Activated B cell treated with CpG ODN at 0.5 μM for 24 hours (primary cell): ENCODE measurements at regions of chr15 and their contacts with region 1.

Region 1: GRCh38 chr15:85330901-85331588 is 49.4 kb upstream of the AKAP13 start:
- DNase-seq: peak; percentile 56
- ATAC-seq: peak; percentile 53
- H3K4me3 Mint-ChIP-seq: peak overlapping the region; percentile 90
- H3K27ac Mint-ChIP-seq: peak overlapping the region; percentile 99
- H3K4me1 Mint-ChIP-seq: peaks cover 74% of the 10 kb centered on the region
- H3K27me3 Mint-ChIP-seq: no peaks in the 10 kb centered on the region
- CTCF ChIP-seq: no peak

Region 2: DNA sequence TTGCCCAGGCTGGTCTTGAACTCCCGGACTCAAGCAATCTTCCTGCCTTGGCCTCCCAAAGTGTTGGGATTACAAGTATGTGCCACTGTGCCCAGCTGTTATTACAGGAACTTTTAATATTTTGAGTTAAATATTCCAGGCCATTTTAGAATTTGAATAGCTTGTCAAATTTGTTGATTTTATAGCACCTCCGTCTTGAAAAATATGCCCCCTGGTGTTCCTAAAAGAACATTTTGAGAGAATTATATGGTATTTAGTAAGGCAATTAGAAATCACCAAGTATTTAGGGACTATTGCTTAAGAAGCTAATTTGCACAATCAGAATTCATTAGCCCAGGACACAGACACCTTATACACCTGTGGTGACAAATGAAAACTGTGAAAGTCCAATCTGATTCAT is 325.7 kb before region 1 on chr15:
- CTCF ChIA-PET with region 1: no interaction called
- POLR2A ChIA-PET with region 1: no interaction called
- intact Hi-C with region 1: no loop called
- DNase-seq: no peak
- ATAC-seq: no peak
- H3K4me3 Mint-ChIP-seq: no peak overlapping the region
- H3K27ac Mint-ChIP-seq: no peak overlapping the region
- H3K4me1 Mint-ChIP-seq: peaks cover 67% of the 10 kb centered on the region
- H3K27me3 Mint-ChIP-seq: no peaks in the 10 kb centered on the region
- CTCF ChIP-seq: no peak

Region 3: GRCh38 chr15:85306946-85307708 is 23.9 kb before region 1 on chr15:
- CTCF ChIA-PET with region 1: interaction called, 54 read pairs
- POLR2A ChIA-PET with region 1: interaction called, 409 read pairs
- intact Hi-C with region 1: loop called (anchors 1 kb)
- DNase-seq: no peak
- ATAC-seq: no peak
- H3K4me3 Mint-ChIP-seq: no peak overlapping the region
- H3K27ac Mint-ChIP-seq: peak overlapping the region; percentile 61
- H3K4me1 Mint-ChIP-seq: peaks cover 68% of the 10 kb centered on the region
- H3K27me3 Mint-ChIP-seq: no peaks in the 10 kb centered on the region
- CTCF ChIP-seq: no peak

Region 4: GRCh38 chr15:85380217-85380811 is 49.3 kb after region 1 on chr15 and contains the start of gene AKAP13:
- CTCF ChIA-PET with region 1: interaction called, 9 read pairs
- POLR2A ChIA-PET with region 1: interaction called, 179 read pairs
- intact Hi-C with region 1: loop called (anchors 1 kb)
- DNase-seq: peak; percentile 80
- ATAC-seq: peak; percentile 81
- H3K4me3 Mint-ChIP-seq: peak within 1 kb of the TSS; percentile 93
- H3K27ac Mint-ChIP-seq: peak within 1 kb of the TSS; percentile 94
- H3K4me1 Mint-ChIP-seq: peaks cover 42% of the 10 kb centered on the region
- H3K27me3 Mint-ChIP-seq: no peaks in the 10 kb centered on the region
- CTCF ChIP-seq: no peak
- total RNA-seq, gene AKAP13: 254 and 290 TPM in 2 replicates

Region 5: GRCh38 chr15:85407804-85408746 is 77.0 kb after region 1 on chr15:
- CTCF ChIA-PET with region 1: interaction called, 150 read pairs
- POLR2A ChIA-PET with region 1: interaction called, 94 read pairs
- intact Hi-C with region 1: loop called (anchors 1 kb)
- DNase-seq: no peak
- ATAC-seq: peak; percentile 68
- H3K4me3 Mint-ChIP-seq: peak overlapping the region; percentile 70
- H3K27ac Mint-ChIP-seq: peak overlapping the region; percentile 95
- H3K4me1 Mint-ChIP-seq: peaks cover 88% of the 10 kb centered on the region
- H3K27me3 Mint-ChIP-seq: no peaks in the 10 kb centered on the region
- CTCF ChIP-seq: no peak

Region 6: GRCh38 chr15:85485956-85486567 is 155.0 kb after region 1 on chr15:
- CTCF ChIA-PET with region 1: interaction called, 5 read pairs
- POLR2A ChIA-PET with region 1: interaction called, 7 read pairs
- intact Hi-C with region 1: loop called (anchors 5 kb)
- DNase-seq: no peak
- ATAC-seq: peak; percentile 90
- H3K4me3 Mint-ChIP-seq: no peak overlapping the region
- H3K27ac Mint-ChIP-seq: peak overlapping the region; percentile 64
- H3K4me1 Mint-ChIP-seq: peaks cover 75% of the 10 kb centered on the region
- H3K27me3 Mint-ChIP-seq: no peaks in the 10 kb centered on the region
- CTCF ChIP-seq: peak; percentile 72